Activated naive CD4-positive, alpha-beta T cell treated with anti-CD3 and anti-CD28 coated beads for 36 hours (primary cell): ENCODE measurements at regions of chr6 and their contacts with region 1.

Region 1: GRCh38 chr6:152748843-152749242 is 1.8 kb upstream of the VIP start:
- DNase-seq: no peak
- H3K4me3 Mint-ChIP-seq: no peak overlapping the region
- H3K27ac Mint-ChIP-seq: no peak overlapping the region
- H3K4me1 Mint-ChIP-seq: no peaks in the 10 kb centered on the region
- H3K27me3 Mint-ChIP-seq: peaks cover 5% of the 10 kb centered on the region

Region 2: GRCh38 chr6:152897799-152898399 is 149.1 kb after region 1 on chr6:
- CTCF ChIA-PET with region 1: interaction called, 3 read pairs
- intact Hi-C with region 1: loop called (anchors 5 kb)
- DNase-seq: peak; percentile 83
- H3K4me3 Mint-ChIP-seq: no peak overlapping the region
- H3K27ac Mint-ChIP-seq: no peak overlapping the region
- H3K4me1 Mint-ChIP-seq: no peaks in the 10 kb centered on the region
- H3K27me3 Mint-ChIP-seq: peaks cover 36% of the 10 kb centered on the region